T-cell (primary cell): ENCODE measurements at regions of chr6 and their contacts with region 1.

Region 1: DNA sequence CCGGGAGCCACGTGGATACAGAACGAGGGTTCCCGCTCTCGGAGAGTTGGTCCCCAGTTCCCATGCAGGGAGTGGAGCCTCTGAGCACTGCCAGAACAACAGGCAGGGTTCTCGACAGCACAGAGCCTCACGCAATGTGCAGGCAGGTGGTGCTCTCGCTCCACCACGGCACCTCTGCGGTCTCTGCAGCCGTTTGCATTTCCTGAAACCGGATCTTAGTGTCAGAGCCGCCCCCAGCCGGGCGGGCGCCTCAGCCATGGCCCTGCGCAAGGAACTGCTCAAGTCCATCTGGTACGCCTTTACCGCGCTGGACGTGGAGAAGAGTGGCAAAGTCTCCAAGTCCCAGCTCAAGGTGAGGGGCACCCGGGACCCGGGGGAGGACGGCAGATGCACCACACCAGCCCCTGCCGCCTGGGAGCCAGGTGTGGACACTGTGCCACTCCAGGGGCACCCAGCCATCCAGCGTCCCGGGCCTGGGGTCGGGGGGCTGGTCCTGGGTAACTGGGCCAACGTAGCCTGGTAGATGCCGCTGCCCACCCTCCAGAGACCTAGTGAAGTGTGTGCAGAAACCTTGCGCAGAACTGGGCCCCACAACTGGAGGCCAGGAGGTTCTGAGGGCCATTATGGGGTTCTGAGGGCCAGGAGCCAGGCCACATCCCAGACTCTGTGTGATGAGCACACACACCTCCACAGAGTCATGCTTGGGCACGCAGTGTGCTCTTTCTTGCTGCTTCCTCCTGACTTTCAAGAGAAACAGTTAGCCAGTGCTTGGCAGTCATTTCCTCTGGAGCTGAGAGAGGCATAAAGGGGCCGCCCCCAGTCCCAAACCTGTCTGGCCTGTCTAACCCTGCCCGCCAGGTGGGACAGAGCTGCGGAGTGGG is at the start of gene DEF6:
- DNase-seq: peak; percentile 76 to 94 (median 85)
- ATAC-seq: peak; percentile 76 to 86 (median 80)
- H3K4me3 ChIP-seq: peak within 1 kb of the TSS; percentile 70 to 97
- H3K4me3 Mint-ChIP-seq: peak within 1 kb of the TSS; percentile 86 to 97 (median 90)
- H3K27ac ChIP-seq: peak within 1 kb of the TSS; percentile 93
- H3K27ac Mint-ChIP-seq: peak within 1 kb of the TSS; percentile 96 to 97
- H3K4me1 ChIP-seq: peaks cover 34 to 45% of the 10 kb centered on the region in 2 experiments
- H3K4me1 Mint-ChIP-seq: peaks cover 48 to 52% (median 52%) of the 10 kb centered on the region in 3 donors
- H3K27me3 ChIP-seq: no peaks in the 10 kb centered on the region
- H3K27me3 Mint-ChIP-seq: no peaks in the 10 kb centered on the region
- total RNA-seq, gene DEF6: 221 to 311 (median 298) TPM

Region 2: DNA sequence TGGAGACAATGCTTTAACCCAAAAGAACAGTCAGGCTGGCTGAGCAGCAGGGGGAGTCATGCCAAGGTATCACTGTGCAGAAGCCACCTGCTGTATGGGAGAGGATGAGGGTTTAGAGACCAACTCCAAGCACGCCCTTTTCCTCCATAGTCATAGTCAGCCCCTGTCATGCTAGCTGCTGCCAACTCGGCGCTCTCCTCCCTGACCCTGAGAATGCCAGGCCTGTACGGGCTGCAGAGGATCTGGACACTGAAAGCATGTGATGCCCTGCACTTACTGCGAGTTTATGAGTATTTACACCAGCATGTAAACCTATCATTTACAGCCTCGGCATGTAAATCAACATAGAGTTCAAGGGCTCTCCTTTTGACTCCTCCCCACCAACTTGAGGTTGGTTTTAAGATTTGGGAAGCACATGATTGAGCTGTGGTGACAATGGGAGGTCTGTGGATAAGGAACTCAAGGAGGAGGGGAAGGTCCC is 95.7 kb before region 1 on chr6:
- CTCF ChIA-PET with region 1: no interaction called
- POLR2A ChIA-PET with region 1: no interaction called
- DNase-seq: no peak
- ATAC-seq: no peak
- H3K4me3 ChIP-seq: no peak overlapping the region
- H3K4me3 Mint-ChIP-seq: no peak overlapping the region
- H3K27ac ChIP-seq: no peak overlapping the region
- H3K27ac Mint-ChIP-seq: no peak overlapping the region
- H3K4me1 ChIP-seq: no peaks in the 10 kb centered on the region
- H3K4me1 Mint-ChIP-seq: no peaks in the 10 kb centered on the region
- H3K27me3 ChIP-seq: peaks cover 5 to 37% of the 10 kb centered on the region in 2 experiments
- H3K27me3 Mint-ChIP-seq: peaks cover 46 to 65% of the 10 kb centered on the region in 2 donors

Region 3: DNA sequence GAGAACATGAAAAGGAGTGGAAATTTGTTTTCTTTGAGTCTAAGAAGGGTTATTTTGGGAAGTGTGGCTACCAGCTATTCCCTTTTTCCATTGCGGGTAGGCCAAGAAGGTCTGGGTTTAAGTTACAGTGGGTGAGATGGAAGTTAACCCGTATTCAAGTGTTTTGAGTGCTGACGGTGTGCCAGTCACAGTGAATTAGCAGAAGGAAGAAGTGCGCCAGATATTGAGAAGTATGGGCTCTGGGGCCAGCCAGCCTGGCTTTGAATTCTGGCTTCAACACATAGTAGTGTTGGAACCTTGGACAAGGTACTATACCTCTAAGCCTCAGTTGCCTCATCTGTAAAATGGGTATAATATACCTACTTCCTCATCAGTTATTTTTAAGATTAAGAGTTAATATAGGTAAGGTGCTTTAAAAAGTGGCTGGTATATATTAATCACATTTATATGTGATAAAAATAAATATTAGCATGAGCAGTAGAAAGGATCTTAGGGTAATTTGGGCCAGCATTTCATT is 22.0 kb before region 1 on chr6:
- CTCF ChIA-PET with region 1: no interaction called
- POLR2A ChIA-PET with region 1: interaction called in 1 of 2 experiments, 12 read pairs
- DNase-seq: no peak
- ATAC-seq: no peak
- H3K4me3 ChIP-seq: no peak overlapping the region
- H3K4me3 Mint-ChIP-seq: no peak overlapping the region
- H3K27ac ChIP-seq: no peak overlapping the region
- H3K27ac Mint-ChIP-seq: no peak overlapping the region
- H3K4me1 ChIP-seq: no peaks in the 10 kb centered on the region
- H3K4me1 Mint-ChIP-seq: peaks cover 6 to 19% (median 11%) of the 10 kb centered on the region in 3 donors
- H3K27me3 ChIP-seq: no peaks in the 10 kb centered on the region
- H3K27me3 Mint-ChIP-seq: no peaks in the 10 kb centered on the region

Region 4: GRCh38 chr6:35327349-35328027 is 29.6 kb after region 1 on chr6:
- CTCF ChIA-PET with region 1: interaction called, 5 to 37 read pairs
- POLR2A ChIA-PET with region 1: interaction called, 3 to 8 read pairs
- DNase-seq: peak; percentile 58 to 84 (median 74)
- ATAC-seq: peak; percentile 73 to 84 (median 78)
- H3K4me3 ChIP-seq: no peak overlapping the region
- H3K4me3 Mint-ChIP-seq: peak overlapping the region in 1 of 3 donors; percentile 2
- H3K27ac ChIP-seq: peak overlapping the region; percentile 39
- H3K27ac Mint-ChIP-seq: peak overlapping the region; percentile 87 to 93
- H3K4me1 ChIP-seq: peaks cover 2 to 23% of the 10 kb centered on the region in 2 experiments
- H3K4me1 Mint-ChIP-seq: peaks cover 20 to 33% (median 29%) of the 10 kb centered on the region in 3 donors
- H3K27me3 ChIP-seq: no peaks in the 10 kb centered on the region
- H3K27me3 Mint-ChIP-seq: no peaks in the 10 kb centered on the region

Region 5: DNA sequence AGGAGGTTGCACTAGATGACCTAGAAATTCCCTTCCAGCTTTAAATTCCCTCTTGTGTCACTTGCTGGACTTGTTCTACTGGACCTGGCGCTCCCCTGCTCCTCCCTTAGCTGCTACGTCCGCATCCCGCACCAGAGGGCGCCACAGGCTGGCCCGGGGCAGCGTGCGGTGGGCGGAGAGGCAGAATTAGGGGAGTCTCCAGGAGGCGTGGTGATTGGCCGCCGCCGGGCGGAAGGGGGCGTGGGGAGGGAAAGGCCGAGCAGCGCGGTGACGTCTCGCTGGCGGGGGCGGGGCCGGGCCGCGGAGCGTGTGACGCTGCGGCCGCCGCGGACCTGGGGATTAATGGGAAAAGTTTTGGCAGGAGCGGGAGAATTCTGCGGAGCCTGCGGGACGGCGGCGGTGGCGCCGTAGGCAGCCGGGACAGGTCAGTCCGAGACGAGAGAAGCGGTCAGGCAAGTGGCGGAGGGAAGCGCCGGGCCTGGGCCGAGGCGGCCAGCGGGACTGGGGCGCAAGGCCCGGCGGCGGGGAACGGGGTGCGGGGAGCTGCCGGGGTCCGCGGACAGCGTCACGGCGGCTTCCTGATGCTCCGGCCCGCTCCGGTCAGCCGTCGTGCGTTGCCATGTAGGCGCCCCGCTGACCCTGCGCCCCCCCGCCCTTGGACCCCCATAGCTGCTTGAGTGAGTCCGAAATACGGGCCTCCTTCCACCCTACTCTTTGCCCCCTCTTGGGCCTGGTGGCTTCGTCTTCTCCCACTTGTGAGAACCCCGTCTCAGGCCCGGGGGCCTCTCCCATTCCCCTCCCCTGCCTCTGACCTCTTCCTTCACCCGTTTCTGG is 44.6 kb after region 1 on chr6 and contains the start of gene PPARD:
- CTCF ChIA-PET with region 1: interaction called in 1 of 2 experiments, 11 read pairs
- POLR2A ChIA-PET with region 1: interaction called in 1 of 2 experiments, 9 read pairs
- DNase-seq: peak; percentile 88 to 98 (median 95)
- ATAC-seq: peak; percentile 96 to 99 (median 98)
- H3K4me3 ChIP-seq: peak within 1 kb of the TSS; percentile 73 to 79
- H3K4me3 Mint-ChIP-seq: peak within 1 kb of the TSS; percentile 93 to 96 (median 93)
- H3K27ac ChIP-seq: peak within 1 kb of the TSS; percentile 65
- H3K27ac Mint-ChIP-seq: peak within 1 kb of the TSS; percentile 91 to 96
- H3K4me1 ChIP-seq: peaks cover 23 to 45% of the 10 kb centered on the region in 2 experiments
- H3K4me1 Mint-ChIP-seq: peaks cover 45 to 53% (median 53%) of the 10 kb centered on the region in 3 donors
- H3K27me3 ChIP-seq: no peaks in the 10 kb centered on the region
- H3K27me3 Mint-ChIP-seq: no peaks in the 10 kb centered on the region
- total RNA-seq, gene PPARD: 36.8 to 41.3 (median 37.9) TPM

Region 6: GRCh38 chr6:35452186-35453090 is 154.6 kb after region 1 on chr6 and contains the start of gene FANCE:
- CTCF ChIA-PET with region 1: interaction called, 3 to 14 read pairs
- POLR2A ChIA-PET with region 1: no interaction called
- DNase-seq: peak; percentile 36 to 95 (median 71)
- ATAC-seq: peak; percentile 76 to 81 (median 78)
- H3K4me3 ChIP-seq: peak within 1 kb of the TSS; percentile 63 to 66
- H3K4me3 Mint-ChIP-seq: peak within 1 kb of the TSS; percentile 79 to 83 (median 81)
- H3K27ac ChIP-seq: peak within 1 kb of the TSS; percentile 57
- H3K27ac Mint-ChIP-seq: peak within 1 kb of the TSS; percentile 68 to 73
- H3K4me1 ChIP-seq: peaks cover 9 to 29% of the 10 kb centered on the region in 2 experiments
- H3K4me1 Mint-ChIP-seq: peaks cover 41 to 49% (median 43%) of the 10 kb centered on the region in 3 donors
- H3K27me3 ChIP-seq: peaks cover 0 to 2% of the 10 kb centered on the region in 2 experiments
- H3K27me3 Mint-ChIP-seq: no peaks in the 10 kb centered on the region
- total RNA-seq, gene FANCE: 5.6 to 12.8 (median 11.7) TPM